ENCODE measurements at regions of chr3 and their contacts with region 1.

Region 1: GRCh38 chr3:100254168-100254777 is 6.5 kb upstream of the TBC1D23 start:
- DNase-seq: peak; percentile 68
- H3K4me3 ChIP-seq: no peak overlapping the region
- H3K27ac ChIP-seq: no peak overlapping the region
- H3K4me1 ChIP-seq: peaks cover 9 to 23% of the 10 kb centered on the region in 2 experiments; a peak in 3 of 4 replicates
- H3K27me3 ChIP-seq: no peaks in the 10 kb centered on the region
- CTCF ChIP-seq: peak; percentile 89
- EP300 ChIP-seq: no peak
- RAD21 ChIP-seq: peak; percentile 97

Region 2: DNA sequence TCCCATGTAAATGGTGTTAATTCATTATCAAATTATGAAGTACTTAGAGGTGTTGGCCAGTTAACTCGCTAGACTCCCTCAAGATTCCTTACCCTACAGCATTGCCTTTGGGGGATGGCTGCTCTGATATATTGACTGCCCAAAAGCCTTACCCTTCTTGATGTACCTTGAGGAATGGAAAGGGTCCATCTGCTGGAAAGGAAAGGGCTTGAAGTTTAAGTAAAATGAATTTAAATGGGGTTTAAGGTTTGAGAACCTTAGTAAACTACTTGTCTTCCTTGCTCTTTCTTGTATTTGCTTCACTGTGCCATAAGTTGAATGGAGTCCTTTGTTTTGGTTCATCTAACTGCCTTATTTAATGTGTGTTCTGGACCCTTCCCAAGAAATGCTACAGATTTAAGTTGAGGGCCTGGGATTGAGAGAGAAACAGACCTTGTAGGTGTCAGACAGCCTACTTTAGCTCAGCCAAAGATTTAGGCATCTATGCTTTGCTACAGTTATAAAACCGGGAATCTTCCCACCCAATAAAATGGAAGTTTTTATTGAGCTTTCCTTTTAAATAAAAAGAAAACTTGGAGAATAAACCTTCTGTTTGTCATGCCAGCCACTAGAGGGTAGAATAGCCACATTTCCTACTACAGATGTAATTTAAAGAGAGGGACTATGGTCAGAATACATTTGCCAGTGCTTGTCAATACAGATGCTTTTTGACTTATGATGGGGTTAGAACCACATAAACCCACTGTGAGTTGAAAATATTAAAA is 411.3 kb before region 1 on chr3:
- CTCF ChIA-PET with region 1: interaction called, 132 read pairs
- POLR2A ChIA-PET with region 1: no interaction called
- DNase-seq: peak; percentile 37
- H3K4me3 ChIP-seq: no peak overlapping the region; a peak in 1 of 4 replicates
- H3K27ac ChIP-seq: peak overlapping the region; percentile 11 to 32; a peak in 2 of 4 replicates
- H3K4me1 ChIP-seq: peaks cover 4 to 7% of the 10 kb centered on the region in 2 experiments; a peak in 2 of 4 replicates
- H3K27me3 ChIP-seq: no peaks in the 10 kb centered on the region
- CTCF ChIP-seq: peak; percentile 86
- EP300 ChIP-seq: no peak
- RAD21 ChIP-seq: peak; percentile 84

Region 3: DNA sequence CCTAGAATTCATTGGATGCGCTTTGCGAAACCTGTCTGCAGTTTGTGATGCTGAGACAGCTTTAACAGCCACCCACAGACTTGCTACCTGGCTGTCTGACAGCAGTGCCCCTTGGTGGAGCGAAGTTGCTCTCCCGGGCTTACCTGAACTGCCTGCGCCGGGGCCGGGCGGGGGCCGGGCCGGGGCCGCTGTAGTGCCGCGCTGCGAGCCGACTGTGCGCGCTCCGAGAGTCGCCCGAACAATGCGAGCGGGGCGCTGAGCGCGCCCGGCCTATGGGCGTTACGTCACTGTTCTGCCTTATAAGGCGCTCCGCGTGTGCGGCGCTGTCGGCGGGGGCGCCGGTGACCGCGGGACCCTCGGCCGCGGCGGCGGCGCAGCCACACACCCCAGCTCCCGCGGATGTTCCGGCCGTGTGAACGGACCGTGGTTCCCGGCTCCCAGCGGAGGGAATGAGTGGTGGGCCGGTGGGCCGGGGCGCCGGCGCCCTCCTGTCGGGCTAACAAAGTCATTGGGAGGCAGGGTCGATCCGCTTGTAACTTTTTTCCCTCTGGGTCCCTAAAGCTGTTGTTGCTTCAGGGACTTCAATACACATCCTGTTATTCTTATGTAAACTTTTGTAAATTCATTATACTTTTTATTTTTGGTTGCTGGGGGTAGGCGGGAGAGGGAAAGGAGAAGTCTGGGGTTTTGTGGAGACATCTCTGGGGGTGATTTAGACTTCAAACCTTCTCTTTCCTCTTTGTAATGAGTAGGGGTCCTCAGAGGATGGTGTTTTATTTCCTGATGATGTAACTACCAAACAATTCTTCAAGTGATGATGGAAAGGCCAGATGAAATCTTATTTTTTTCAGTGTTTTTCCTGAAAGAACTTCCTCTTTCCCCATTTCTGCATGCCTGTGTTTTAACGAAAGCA is 378.1 kb before region 1 on chr3:
- CTCF ChIA-PET with region 1: interaction called, 11 read pairs
- POLR2A ChIA-PET with region 1: no interaction called
- DNase-seq: peak; percentile 88
- H3K4me3 ChIP-seq: peak overlapping the region; percentile 82 to 83
- H3K27ac ChIP-seq: peak overlapping the region; percentile 34 to 85
- H3K4me1 ChIP-seq: peaks cover 10 to 21% of the 10 kb centered on the region in 2 experiments; a peak in 3 of 4 replicates
- H3K27me3 ChIP-seq: no peaks in the 10 kb centered on the region
- CTCF ChIP-seq: peak; percentile 31; the same call in 1 of the 2 replicates
- EP300 ChIP-seq: peak in 1 of 2 experiments; percentile 28; a peak in 1 of 4 replicates
- RAD21 ChIP-seq: peak; percentile 36; the same call in 1 of the 2 replicates

Region 4: DNA sequence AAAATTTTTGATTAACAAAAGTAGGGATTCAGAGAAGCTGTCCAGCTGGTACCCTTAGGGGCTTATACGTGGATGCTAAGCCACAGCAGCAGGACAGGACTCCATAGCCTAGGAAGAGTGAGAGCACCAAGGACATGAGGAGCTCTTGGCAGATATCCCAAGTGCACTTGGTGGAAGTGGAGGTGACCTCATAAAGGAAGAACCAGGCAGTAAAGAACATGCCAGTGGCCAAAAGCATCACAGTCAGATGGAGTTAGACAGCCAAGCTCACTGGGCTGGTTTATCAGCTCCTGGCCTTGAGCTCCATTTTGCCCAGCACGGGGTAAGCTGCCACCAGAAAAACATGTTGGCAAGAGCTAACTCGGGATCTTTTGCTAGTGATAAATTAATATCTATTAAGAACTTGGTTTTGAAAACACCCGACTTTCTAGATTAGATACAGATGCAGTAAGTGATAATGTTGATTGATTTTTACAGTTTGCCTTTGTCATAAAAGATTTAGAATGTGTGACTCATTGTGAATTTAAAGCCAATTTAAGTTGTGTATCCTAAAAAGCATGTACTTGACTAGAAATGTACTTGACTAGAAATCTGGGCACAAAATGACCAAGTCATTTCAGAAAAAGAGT is 328.6 kb before region 1 on chr3:
- CTCF ChIA-PET with region 1: no interaction called
- POLR2A ChIA-PET with region 1: no interaction called
- DNase-seq: peak; percentile 27
- H3K4me3 ChIP-seq: no peak overlapping the region
- H3K27ac ChIP-seq: peak overlapping the region; percentile 43 to 70; a peak in 3 of 4 replicates
- H3K4me1 ChIP-seq: peaks cover 6 to 18% of the 10 kb centered on the region in 2 experiments; a peak in 3 of 4 replicates
- H3K27me3 ChIP-seq: no peaks in the 10 kb centered on the region
- CTCF ChIP-seq: no peak
- EP300 ChIP-seq: peak in 1 of 2 experiments; percentile 33; a peak in 1 of 4 replicates
- RAD21 ChIP-seq: no peak

Region 5: GRCh38 chr3:100060685-100061484 is 193.4 kb before region 1 on chr3:
- CTCF ChIA-PET with region 1: interaction called, 31 read pairs
- POLR2A ChIA-PET with region 1: no interaction called
- DNase-seq: no peak
- H3K4me3 ChIP-seq: no peak overlapping the region
- H3K27ac ChIP-seq: no peak overlapping the region
- H3K4me1 ChIP-seq: peaks cover 0 to 3% of the 10 kb centered on the region in 2 experiments; a peak in 1 of 4 replicates
- H3K27me3 ChIP-seq: no peaks in the 10 kb centered on the region
- CTCF ChIP-seq: no peak
- EP300 ChIP-seq: no peak
- RAD21 ChIP-seq: no peak

Region 6: GRCh38 chr3:100089812-100090668 is 164.2 kb before region 1 on chr3:
- CTCF ChIA-PET with region 1: interaction called, 13 read pairs
- POLR2A ChIA-PET with region 1: no interaction called
- DNase-seq: no peak
- H3K4me3 ChIP-seq: no peak overlapping the region; a peak in 1 of 4 replicates
- H3K27ac ChIP-seq: peak overlapping the region in 1 of 2 experiments; percentile 52; a peak in 2 of 4 replicates
- H3K4me1 ChIP-seq: peaks cover 3 to 20% of the 10 kb centered on the region in 2 experiments
- H3K27me3 ChIP-seq: no peaks in the 10 kb centered on the region
- CTCF ChIP-seq: peak; percentile 62
- EP300 ChIP-seq: no peak
- RAD21 ChIP-seq: peak; percentile 43

Region 7: DNA sequence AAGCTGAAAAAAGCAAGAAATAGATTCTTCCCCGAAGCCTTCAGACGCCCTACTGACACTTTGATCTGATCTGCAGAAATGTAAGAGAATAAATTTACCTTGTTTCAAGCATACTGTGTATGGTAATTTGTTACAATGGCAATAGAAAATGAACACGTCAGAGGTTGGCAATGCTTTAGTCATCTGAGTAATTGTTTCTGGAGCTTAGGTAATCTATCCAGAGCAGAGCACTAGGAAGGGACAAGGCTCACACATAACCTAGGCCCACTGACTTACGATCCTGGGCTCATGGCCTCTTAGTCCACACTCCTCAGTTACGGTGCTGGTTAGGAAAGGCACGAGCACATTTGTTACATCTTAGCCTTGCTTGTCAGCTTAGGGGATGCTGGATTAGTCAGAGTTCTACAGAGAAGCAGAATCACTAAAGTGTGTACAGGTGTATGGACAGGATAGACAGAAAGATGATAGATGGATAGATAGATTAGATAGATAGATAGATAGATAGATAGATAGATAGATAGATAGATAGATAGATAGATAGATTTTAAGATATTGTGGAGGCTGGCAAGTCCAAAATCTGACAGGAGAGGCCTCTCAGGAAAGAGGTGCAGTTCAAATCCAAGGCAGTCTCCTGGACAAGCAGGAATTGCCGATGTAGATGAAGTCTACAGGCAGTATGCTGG is 40.2 kb before region 1 on chr3:
- CTCF ChIA-PET with region 1: no interaction called
- POLR2A ChIA-PET with region 1: no interaction called
- DNase-seq: no peak
- H3K4me3 ChIP-seq: no peak overlapping the region
- H3K27ac ChIP-seq: no peak overlapping the region
- H3K4me1 ChIP-seq: no peaks in the 10 kb centered on the region; a peak in 2 of 4 replicates
- H3K27me3 ChIP-seq: no peaks in the 10 kb centered on the region
- CTCF ChIP-seq: no peak
- EP300 ChIP-seq: no peak
- RAD21 ChIP-seq: no peak